Activated CD4-positive, alpha-beta memory T cell treated with anti-CD3 and anti-CD28 coated beads, Interleukin-2, amount 10 ng/mL, durations not matched to agents 7 days and 5 days (primary cell): ENCODE measurements at regions of chr21 and their contacts with region 1.

Region 1: DNA sequence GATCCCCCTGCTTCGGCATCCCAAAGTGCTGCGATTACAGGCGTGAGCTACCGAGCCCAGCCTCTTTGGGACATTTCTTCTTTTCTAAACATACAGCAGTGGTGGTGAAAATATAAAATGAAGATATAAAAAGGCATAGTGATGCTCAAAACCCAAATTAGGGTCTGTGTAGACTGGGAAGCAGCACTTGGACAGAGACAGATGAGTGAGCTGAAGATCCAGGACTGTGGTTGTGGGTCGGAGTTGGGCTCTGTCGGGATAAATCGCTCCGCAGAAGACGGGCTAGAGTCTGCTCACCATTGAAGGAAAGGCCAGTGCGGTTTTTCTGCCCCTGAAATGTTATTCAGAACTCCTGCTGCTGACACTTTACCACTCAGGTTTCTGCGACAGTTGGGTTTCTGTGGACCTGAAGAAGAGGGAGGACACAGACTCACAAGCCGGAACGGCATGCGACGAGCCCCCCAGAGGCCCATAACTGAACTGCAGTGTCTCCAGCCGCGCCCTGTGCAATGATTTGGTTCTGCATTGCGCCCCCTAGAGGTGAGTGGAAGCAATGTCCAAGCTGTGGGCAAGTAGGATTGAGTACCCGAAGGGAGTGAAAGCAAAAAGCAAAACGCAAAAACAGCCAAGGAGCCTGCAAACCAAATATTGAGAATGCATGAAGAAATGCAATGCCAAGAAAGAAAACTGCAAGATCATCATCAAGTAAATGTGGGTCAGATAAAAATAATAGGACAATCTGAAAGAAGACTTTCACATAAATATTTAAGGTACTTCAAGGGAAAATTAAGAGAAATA is 66.6 kb downstream of the GABPA start:
- DNase-seq: peak; percentile 88
- H3K4me3 Mint-ChIP-seq: no peak overlapping the region
- H3K27ac Mint-ChIP-seq: no peak overlapping the region
- H3K4me1 Mint-ChIP-seq: peaks cover 6% of the 10 kb centered on the region
- H3K27me3 Mint-ChIP-seq: peaks cover 19% of the 10 kb centered on the region

Region 2: GRCh38 chr21:25734904-25735645 is 66.3 kb before region 1 on chr21 and contains the starts of genes ATP5PF and GABPA:
- CTCF ChIA-PET with region 1: interaction called, 11 read pairs
- POLR2A ChIA-PET with region 1: no interaction called
- DNase-seq: peak; percentile 97
- H3K4me3 Mint-ChIP-seq: peak within 1 kb of the TSS; percentile 98
- H3K27ac Mint-ChIP-seq: peak within 1 kb of the TSS; percentile 100
- H3K4me1 Mint-ChIP-seq: peaks cover 48% of the 10 kb centered on the region
- H3K27me3 Mint-ChIP-seq: no peaks in the 10 kb centered on the region
- total RNA-seq, gene ATP5PF: 109 to 118 TPM
- total RNA-seq, gene GABPA: 25.6 to 27.7 TPM

Region 3: GRCh38 chr21:25767921-25768320 is 33.5 kb before region 1 on chr21:
- CTCF ChIA-PET with region 1: interaction called, 10 read pairs
- POLR2A ChIA-PET with region 1: no interaction called
- DNase-seq: no peak
- H3K4me3 Mint-ChIP-seq: no peak overlapping the region
- H3K27ac Mint-ChIP-seq: no peak overlapping the region
- H3K4me1 Mint-ChIP-seq: no peaks in the 10 kb centered on the region
- H3K27me3 Mint-ChIP-seq: no peaks in the 10 kb centered on the region

Region 4: DNA sequence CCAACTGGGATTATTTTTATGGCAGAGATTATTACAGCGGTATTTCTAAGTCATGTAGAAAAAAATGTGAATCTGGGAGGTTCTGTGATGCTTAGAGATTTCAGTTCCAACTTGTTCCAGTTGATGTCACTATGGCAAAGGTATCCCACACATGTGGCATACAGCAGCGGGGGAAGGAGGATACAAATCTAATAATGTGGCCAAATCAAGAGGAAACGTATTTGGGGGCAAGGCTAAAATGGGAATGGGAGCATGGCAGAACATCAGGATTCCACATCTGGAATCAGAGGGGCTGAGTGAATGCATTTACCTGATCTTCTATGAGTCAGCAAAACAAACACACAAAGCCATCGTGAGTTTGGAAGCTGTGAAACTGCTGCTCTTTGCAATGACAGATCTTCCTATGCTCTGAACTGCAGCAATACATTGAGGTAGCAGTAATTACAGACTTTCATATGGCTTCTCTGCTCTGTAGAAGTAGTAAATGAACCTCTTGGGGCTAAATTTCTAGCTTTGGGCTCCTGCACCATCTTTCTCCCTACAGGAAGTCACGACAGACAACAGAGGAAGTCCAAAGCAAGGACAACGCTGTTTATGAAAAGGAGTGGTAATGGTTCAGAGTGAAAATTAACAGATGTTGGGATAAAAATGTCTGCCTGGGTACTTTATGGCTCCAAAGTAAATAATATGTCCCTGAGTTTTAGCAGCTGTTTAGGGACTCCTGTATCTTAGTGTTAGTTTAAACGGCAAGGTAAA is 11.1 kb before region 1 on chr21:
- CTCF ChIA-PET with region 1: interaction called, 26 read pairs
- POLR2A ChIA-PET with region 1: no interaction called
- DNase-seq: no peak
- H3K4me3 Mint-ChIP-seq: peak overlapping the region; percentile 16
- H3K27ac Mint-ChIP-seq: no peak overlapping the region
- H3K4me1 Mint-ChIP-seq: peaks cover 15% of the 10 kb centered on the region
- H3K27me3 Mint-ChIP-seq: peaks cover 17% of the 10 kb centered on the region

Region 5: DNA sequence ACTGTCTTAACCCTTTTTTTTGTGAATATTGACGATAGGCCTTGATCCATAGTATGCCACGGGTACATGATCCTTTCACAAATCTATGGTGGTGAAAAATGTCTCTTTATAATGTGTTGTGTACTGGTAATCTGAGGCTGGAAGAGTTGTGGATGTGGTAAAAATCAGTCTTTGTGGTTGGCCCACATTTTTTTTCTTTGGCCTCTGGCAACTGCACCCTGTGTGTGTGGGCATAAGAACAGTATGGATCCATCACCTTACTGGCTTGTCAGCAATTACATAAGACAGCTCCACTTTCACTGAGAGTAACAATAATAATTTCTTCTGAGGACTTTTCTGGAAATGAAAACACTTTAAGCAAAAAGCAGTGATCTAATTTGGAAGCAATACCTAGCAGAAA is 35.0 kb after region 1 on chr21:
- CTCF ChIA-PET with region 1: no interaction called
- POLR2A ChIA-PET with region 1: no interaction called
- DNase-seq: no peak
- H3K4me3 Mint-ChIP-seq: no peak overlapping the region
- H3K27ac Mint-ChIP-seq: no peak overlapping the region
- H3K4me1 Mint-ChIP-seq: peaks cover 11% of the 10 kb centered on the region
- H3K27me3 Mint-ChIP-seq: peaks cover 9% of the 10 kb centered on the region

Region 6: DNA sequence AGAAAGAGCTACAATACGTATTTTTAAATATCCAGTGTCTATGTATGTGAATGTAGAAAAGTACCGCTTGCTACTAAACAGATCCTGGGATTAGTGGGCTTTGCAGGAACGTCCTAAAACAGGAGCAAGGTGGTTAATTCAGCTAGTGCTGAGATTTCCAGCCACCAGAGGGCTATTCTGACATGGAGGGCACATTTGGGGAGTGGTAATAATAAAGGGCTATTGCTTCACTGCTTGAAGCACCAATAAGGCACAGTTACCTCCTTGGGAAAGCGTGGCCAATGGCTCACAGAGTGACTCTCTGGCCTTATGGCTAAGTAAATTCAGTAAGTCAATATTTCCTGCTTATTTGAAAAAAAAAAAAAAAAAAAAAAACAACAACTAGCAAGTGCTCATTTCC is 85.8 kb after region 1 on chr21:
- CTCF ChIA-PET with region 1: no interaction called
- POLR2A ChIA-PET with region 1: no interaction called
- DNase-seq: no peak
- H3K4me3 Mint-ChIP-seq: no peak overlapping the region
- H3K27ac Mint-ChIP-seq: no peak overlapping the region
- H3K4me1 Mint-ChIP-seq: no peaks in the 10 kb centered on the region
- H3K27me3 Mint-ChIP-seq: no peaks in the 10 kb centered on the region